ENCODE measurements at regions of chr3 and their contacts with region 1.

Region 1: DNA sequence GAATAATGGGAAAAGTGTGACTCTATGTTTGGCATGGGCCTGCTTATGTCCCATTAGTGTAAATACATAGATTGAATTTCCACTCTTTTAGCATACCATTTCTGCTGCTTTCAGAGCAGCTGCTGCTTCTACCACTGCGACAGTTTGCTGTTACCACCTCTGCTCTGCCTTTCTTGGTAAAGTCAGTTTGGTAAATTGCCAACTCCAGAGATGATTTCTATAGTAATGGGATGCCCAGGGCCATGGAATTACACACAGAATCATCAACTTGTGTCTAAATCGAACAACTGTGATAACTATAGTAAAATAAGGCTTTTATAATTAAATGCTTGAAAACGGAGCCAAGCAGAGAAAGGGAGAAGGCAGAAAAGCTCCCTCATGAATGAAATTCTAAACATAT is 168.4 kb upstream of the VEPH1 start:
- DNase-seq: no peak
- H3K4me3 ChIP-seq: no peak overlapping the region
- H3K27ac ChIP-seq: no peak overlapping the region
- H3K4me1 ChIP-seq: no peaks in the 10 kb centered on the region
- H3K27me3 ChIP-seq: no peaks in the 10 kb centered on the region
- CTCF ChIP-seq: no peak

Region 2: GRCh38 chr3:157693762-157694161 is 22.1 kb after region 1 on chr3:
- CTCF ChIA-PET with region 1: interaction called, 10 read pairs
- POLR2A ChIA-PET with region 1: no interaction called
- intact Hi-C with region 1: no loop called
- DNase-seq: no peak
- H3K4me3 ChIP-seq: no peak overlapping the region
- H3K27ac ChIP-seq: no peak overlapping the region
- H3K4me1 ChIP-seq: no peaks in the 10 kb centered on the region
- H3K27me3 ChIP-seq: no peaks in the 10 kb centered on the region
- CTCF ChIP-seq: no peak